ENCODE measurements at regions of chr6 and their contacts with region 1.

Region 1: GRCh38 chr6:19024737-19025136 is 637.6 kb downstream of the RNF144B start:
- DNase-seq: no peak
- ATAC-seq: peak; percentile 38; the same call in 1 of the 3 replicates
- H3K4me3 ChIP-seq: no peak overlapping the region
- H3K27ac ChIP-seq: no peak overlapping the region
- H3K4me1 ChIP-seq: no peaks in the 10 kb centered on the region
- H3K27me3 ChIP-seq: no peaks in the 10 kb centered on the region
- CTCF ChIP-seq: peak in 2 of 3 experiments; percentile 16 to 31; a peak in 2 of 6 replicates
- EP300 ChIP-seq: no peak
- POLR2A ChIP-seq: no peak
- RAD21 ChIP-seq: peak; percentile 39

Region 2: DNA sequence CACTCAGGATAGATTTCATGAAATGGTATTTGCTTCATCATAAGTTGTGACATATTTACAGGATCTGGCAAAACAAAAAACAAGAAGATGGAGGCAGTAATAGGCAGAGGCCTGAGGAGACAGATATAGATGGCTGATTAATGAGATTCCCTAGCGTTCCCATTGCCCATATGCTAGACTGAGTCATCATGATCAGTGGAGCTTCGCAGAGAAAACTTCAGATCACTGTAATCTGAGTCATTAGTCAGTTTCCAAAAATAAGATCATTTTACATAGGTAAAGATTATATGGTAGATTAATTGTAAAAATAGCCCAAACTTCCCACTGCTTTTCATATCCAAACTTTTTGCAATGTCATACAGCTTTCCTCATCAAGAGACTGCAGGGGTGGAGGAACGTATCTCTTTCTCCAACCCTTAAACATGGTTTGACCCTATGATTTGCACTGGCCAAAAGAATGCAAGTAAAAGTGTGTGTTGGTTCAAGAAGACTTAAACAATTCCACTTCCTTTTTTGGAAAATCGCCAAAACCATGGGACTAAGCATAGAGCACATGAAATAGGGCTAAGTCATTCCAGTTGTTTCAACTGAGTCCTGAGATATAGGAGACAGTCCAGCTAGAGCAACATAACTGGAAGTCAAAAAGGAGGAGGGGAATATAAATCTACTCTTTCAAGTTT is 11.6 kb before region 1 on chr6:
- CTCF ChIA-PET with region 1: no interaction called
- POLR2A ChIA-PET with region 1: no interaction called
- RAD21 ChIA-PET with region 1: no interaction called
- SMC1A ChIA-PET with region 1: no interaction called
- in situ Hi-C with region 1: no loop called
- intact Hi-C with region 1: no loop called
- DNase-seq: no peak
- ATAC-seq: no peak
- H3K4me3 ChIP-seq: no peak overlapping the region
- H3K27ac ChIP-seq: no peak overlapping the region
- H3K4me1 ChIP-seq: no peaks in the 10 kb centered on the region
- H3K27me3 ChIP-seq: no peaks in the 10 kb centered on the region
- CTCF ChIP-seq: no peak
- EP300 ChIP-seq: no peak
- POLR2A ChIP-seq: no peak
- RAD21 ChIP-seq: no peak

Region 3: GRCh38 chr6:20509212-20509611 is 1484.5 kb after region 1 on chr6:
- CTCF ChIA-PET with region 1: no interaction called
- POLR2A ChIA-PET with region 1: no interaction called
- RAD21 ChIA-PET with region 1: no interaction called
- SMC1A ChIA-PET with region 1: no interaction called
- in situ Hi-C with region 1: loop called (anchors 25 kb)
- intact Hi-C with region 1: no loop called
- DNase-seq: no peak
- ATAC-seq: no peak
- H3K4me3 ChIP-seq: no peak overlapping the region
- H3K27ac ChIP-seq: no peak overlapping the region
- H3K4me1 ChIP-seq: no peaks in the 10 kb centered on the region
- H3K27me3 ChIP-seq: no peaks in the 10 kb centered on the region
- CTCF ChIP-seq: no peak
- EP300 ChIP-seq: no peak
- POLR2A ChIP-seq: no peak
- RAD21 ChIP-seq: no peak